Caco-2 (cell line): ENCODE measurements at regions of chr6 and their contacts with region 1.

Region 1: GRCh38 chr6:40308533-40309306 is 278.4 kb downstream of the LRFN2 start:
- DNase-seq: peak; percentile 65 to 80
- H3K4me3 ChIP-seq: no peak overlapping the region
- H3K4me3 Mint-ChIP-seq: no peak overlapping the region
- H3K27ac Mint-ChIP-seq: no peak overlapping the region
- H3K4me1 ChIP-seq: no peaks in the 10 kb centered on the region
- H3K4me1 Mint-ChIP-seq: no peaks in the 10 kb centered on the region
- H3K27me3 ChIP-seq: no peaks in the 10 kb centered on the region; the same call in 1 of the 2 replicates
- H3K27me3 Mint-ChIP-seq: peaks cover 25% of the 10 kb centered on the region
- CTCF ChIP-seq: peak; percentile 83 to 88

Region 2: GRCh38 chr6:39347906-39348585 is 960.7 kb before region 1 on chr6:
- CTCF ChIA-PET with region 1: no interaction called
- POLR2A ChIA-PET with region 1: no interaction called
- intact Hi-C with region 1: loop called (anchors 5 kb)
- DNase-seq: peak; percentile 56 to 66
- H3K4me3 ChIP-seq: no peak overlapping the region
- H3K4me3 Mint-ChIP-seq: no peak overlapping the region
- H3K27ac Mint-ChIP-seq: no peak overlapping the region
- H3K4me1 ChIP-seq: no peaks in the 10 kb centered on the region
- H3K4me1 Mint-ChIP-seq: no peaks in the 10 kb centered on the region
- H3K27me3 ChIP-seq: no peaks in the 10 kb centered on the region; the same call in 1 of the 2 replicates
- H3K27me3 Mint-ChIP-seq: peaks cover 7% of the 10 kb centered on the region
- CTCF ChIP-seq: peak; percentile 77 to 79

Region 3: GRCh38 chr6:39980839-39981580 is 327.7 kb before region 1 on chr6:
- CTCF ChIA-PET with region 1: interaction called, 3 read pairs
- POLR2A ChIA-PET with region 1: no interaction called
- intact Hi-C with region 1: loop called (anchors 1 kb)
- DNase-seq: peak in 1 of 2 experiments; percentile 70
- H3K4me3 ChIP-seq: no peak overlapping the region
- H3K4me3 Mint-ChIP-seq: no peak overlapping the region
- H3K27ac Mint-ChIP-seq: no peak overlapping the region
- H3K4me1 ChIP-seq: peaks cover 7% of the 10 kb centered on the region
- H3K4me1 Mint-ChIP-seq: no peaks in the 10 kb centered on the region
- H3K27me3 ChIP-seq: no peaks in the 10 kb centered on the region
- H3K27me3 Mint-ChIP-seq: no peaks in the 10 kb centered on the region
- CTCF ChIP-seq: peak; percentile 52 to 55

Region 4: GRCh38 chr6:40082278-40083043 is 226.3 kb before region 1 on chr6:
- CTCF ChIA-PET with region 1: no interaction called
- POLR2A ChIA-PET with region 1: no interaction called
- intact Hi-C with region 1: no loop called
- DNase-seq: no peak
- H3K4me3 ChIP-seq: no peak overlapping the region
- H3K4me3 Mint-ChIP-seq: no peak overlapping the region
- H3K27ac Mint-ChIP-seq: no peak overlapping the region
- H3K4me1 ChIP-seq: peaks cover 8% of the 10 kb centered on the region
- H3K4me1 Mint-ChIP-seq: no peaks in the 10 kb centered on the region
- H3K27me3 ChIP-seq: no peaks in the 10 kb centered on the region
- H3K27me3 Mint-ChIP-seq: peaks cover 5% of the 10 kb centered on the region
- CTCF ChIP-seq: no peak

Region 5: GRCh38 chr6:40520084-40520483 is 211.4 kb after region 1 on chr6:
- CTCF ChIA-PET with region 1: no interaction called
- POLR2A ChIA-PET with region 1: no interaction called
- intact Hi-C with region 1: no loop called
- DNase-seq: no peak
- H3K4me3 ChIP-seq: no peak overlapping the region
- H3K4me3 Mint-ChIP-seq: no peak overlapping the region
- H3K27ac Mint-ChIP-seq: no peak overlapping the region
- H3K4me1 ChIP-seq: no peaks in the 10 kb centered on the region
- H3K4me1 Mint-ChIP-seq: no peaks in the 10 kb centered on the region
- H3K27me3 ChIP-seq: no peaks in the 10 kb centered on the region; the same call in 1 of the 2 replicates
- H3K27me3 Mint-ChIP-seq: peaks cover 20% of the 10 kb centered on the region
- CTCF ChIP-seq: no peak